HepG2 (cell line): ENCODE measurements at regions of chr19 and their contacts with region 1.

Region 1: DNA sequence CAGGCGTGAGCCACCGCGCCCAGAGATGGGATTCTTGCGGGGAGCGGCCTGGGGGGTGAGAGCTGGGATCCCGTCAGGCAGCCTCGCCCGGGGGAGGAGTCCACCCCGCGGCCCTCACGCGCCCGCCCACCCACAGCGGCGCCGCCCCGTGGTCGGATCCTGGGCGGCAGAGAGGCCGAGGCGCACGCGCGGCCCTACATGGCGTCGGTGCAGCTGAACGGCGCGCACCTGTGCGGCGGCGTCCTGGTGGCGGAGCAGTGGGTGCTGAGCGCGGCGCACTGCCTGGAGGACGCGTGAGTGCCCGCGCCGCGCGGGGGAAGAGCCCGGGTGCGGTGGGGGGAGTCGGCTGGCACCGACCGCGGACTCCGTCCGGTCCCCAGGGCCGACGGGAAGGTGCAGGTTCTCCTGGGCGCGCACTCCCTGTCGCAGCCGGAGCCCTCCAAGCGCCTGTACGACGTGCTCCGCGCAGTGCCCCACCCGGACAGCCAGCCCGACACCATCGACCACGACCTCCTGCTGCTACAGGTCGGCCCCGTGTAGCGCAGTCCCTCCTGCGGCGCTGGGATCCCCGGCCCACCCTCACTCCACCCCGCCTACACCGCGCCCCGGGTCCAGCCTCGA is 1.1 kb downstream of the CFD start:
- DNase-seq: peak; percentile 53
- ATAC-seq: peak; percentile 75
- H3K4me3 ChIP-seq: peak overlapping the region; percentile 30 to 67 (median 60); a peak in 5 of 6 replicates
- H3K27ac ChIP-seq: no peak overlapping the region
- H3K4me1 ChIP-seq: peaks cover 19% of the 10 kb centered on the region
- H3K27me3 ChIP-seq: no peaks in the 10 kb centered on the region; a peak in 1 of 5 replicates
- CTCF ChIP-seq: peak; percentile 69
- EP300 ChIP-seq: no peak
- POLR2A ChIP-seq: peak; percentile 29 to 61; a peak in 1 of 4 replicates
- RAD21 ChIP-seq: peak; percentile 36; the same call in 1 of the 2 replicates

Region 2: GRCh38 chr19:917323-918151 is 56.9 kb after region 1 on chr19 and contains the start of gene KISS1R:
- CTCF ChIA-PET with region 1: interaction called, 11 read pairs
- POLR2A ChIA-PET with region 1: no interaction called
- in situ Hi-C with region 1: loop called (anchors 5 kb)
- intact Hi-C with region 1: loop called (anchors 1 kb)
- DNase-seq: peak; percentile 71
- ATAC-seq: peak; percentile 74
- H3K4me3 ChIP-seq: peak within 1 kb of the TSS; percentile 52 to 96 (median 57)
- H3K27ac ChIP-seq: peak within 1 kb of the TSS; percentile 71
- H3K4me1 ChIP-seq: peaks cover 24% of the 10 kb centered on the region
- H3K27me3 ChIP-seq: no peaks in the 10 kb centered on the region; a peak in 1 of 5 replicates
- CTCF ChIP-seq: peak; percentile 90
- EP300 ChIP-seq: no peak
- POLR2A ChIP-seq: peak in 1 of 2 experiments; percentile 76; a peak in 2 of 4 replicates
- RAD21 ChIP-seq: peak; percentile 92
- total RNA-seq, gene KISS1R: 3.9 and 10.2 TPM in 2 replicates